ENCODE measurements at regions of chr12 and their contacts with region 1.

Region 1: DNA sequence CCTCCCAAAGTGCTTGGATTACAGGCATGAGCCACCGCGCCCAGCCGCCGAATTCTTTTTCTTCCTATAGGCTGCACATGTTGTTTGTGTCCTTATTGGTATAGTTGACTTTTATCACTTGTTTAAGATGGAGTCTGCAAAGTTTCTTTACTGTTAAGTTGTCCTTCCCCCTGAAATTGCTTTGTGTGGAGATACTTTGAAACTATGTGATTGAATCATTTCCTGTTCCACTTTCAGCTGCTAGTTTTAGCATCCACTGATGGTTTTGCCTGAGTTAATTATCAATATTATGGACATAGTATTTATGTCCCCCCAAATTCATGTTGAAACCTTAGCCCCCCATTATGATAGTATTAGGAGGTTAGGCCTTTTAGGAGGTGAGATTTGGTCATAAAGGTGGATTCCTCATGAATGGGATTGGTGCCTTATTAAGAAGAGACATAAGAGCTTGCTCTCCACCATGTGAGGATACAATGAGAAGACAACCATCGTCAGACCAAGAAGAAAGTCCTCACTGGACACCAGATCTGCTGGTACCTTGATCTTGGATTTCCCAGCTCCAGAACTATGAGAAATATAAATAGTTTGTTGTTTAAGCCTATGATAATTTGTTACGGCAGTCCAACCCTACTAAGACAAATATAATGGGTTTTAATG is 34.9 kb downstream of the PPHLN1 start:
- DNase-seq: no peak
- H3K4me3 Mint-ChIP-seq: no peak overlapping the region
- H3K27ac Mint-ChIP-seq: no peak overlapping the region
- H3K4me1 Mint-ChIP-seq: peaks cover 20% of the 10 kb centered on the region
- H3K27me3 Mint-ChIP-seq: no peaks in the 10 kb centered on the region

Region 2: DNA sequence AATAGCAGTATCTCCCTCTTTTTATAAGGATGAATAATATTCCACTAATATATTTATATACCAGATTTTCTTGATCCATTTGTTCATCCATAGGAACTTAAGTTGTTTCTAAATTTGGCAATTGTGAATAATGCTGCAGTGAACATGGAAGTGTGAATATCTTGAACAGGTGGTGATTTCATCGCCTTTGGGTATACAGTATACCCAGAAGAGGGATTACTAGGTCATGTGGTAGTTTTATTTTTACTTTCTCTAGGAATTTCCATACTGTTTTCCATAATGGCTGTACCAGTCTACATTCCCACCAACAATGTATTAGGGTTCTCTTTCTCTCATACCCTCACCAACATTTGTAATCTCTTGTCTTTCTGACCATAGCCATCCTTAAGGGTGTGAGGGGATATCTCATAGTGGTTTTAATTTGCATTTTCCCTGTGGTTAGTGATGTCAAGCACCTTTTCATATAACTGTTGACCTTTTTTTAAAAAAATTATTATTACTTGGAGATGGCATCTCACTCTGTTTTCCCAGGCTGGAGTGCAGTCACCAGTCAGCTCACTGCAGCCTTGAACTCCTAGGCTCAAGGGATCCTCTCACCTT is 14.4 kb before region 1 on chr12:
- CTCF ChIA-PET with region 1: interaction called, 13 read pairs
- POLR2A ChIA-PET with region 1: no interaction called
- DNase-seq: no peak
- H3K4me3 Mint-ChIP-seq: no peak overlapping the region
- H3K27ac Mint-ChIP-seq: no peak overlapping the region
- H3K4me1 Mint-ChIP-seq: peaks cover 5% of the 10 kb centered on the region
- H3K27me3 Mint-ChIP-seq: no peaks in the 10 kb centered on the region

Region 3: DNA sequence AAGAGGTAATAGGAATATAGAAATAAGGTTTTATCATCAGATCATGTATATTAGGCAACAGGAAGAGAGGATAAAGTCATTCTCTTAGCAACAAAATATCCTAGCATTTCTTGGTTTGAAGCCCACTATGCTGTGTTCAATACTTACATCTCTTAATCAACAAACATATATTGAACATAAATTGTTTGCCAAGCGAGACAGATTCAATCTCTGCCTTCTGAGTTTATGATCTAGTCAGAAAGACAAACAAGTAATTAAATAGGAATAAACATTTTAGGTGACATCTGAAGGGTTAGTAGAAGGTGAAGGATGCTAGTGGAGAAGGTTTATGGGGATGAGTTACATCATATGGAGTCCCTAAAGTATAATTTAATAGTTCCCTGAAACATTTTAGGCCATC is 19.9 kb after region 1 on chr12:
- CTCF ChIA-PET with region 1: no interaction called
- POLR2A ChIA-PET with region 1: no interaction called
- DNase-seq: no peak
- H3K4me3 Mint-ChIP-seq: no peak overlapping the region
- H3K27ac Mint-ChIP-seq: no peak overlapping the region
- H3K4me1 Mint-ChIP-seq: peaks cover 19% of the 10 kb centered on the region
- H3K27me3 Mint-ChIP-seq: no peaks in the 10 kb centered on the region

Region 4: GRCh38 chr12:42407306-42407705 is 46.4 kb after region 1 on chr12:
- CTCF ChIA-PET with region 1: no interaction called
- POLR2A ChIA-PET with region 1: no interaction called
- DNase-seq: no peak
- H3K4me3 Mint-ChIP-seq: no peak overlapping the region
- H3K27ac Mint-ChIP-seq: no peak overlapping the region
- H3K4me1 Mint-ChIP-seq: peaks cover 2% of the 10 kb centered on the region
- H3K27me3 Mint-ChIP-seq: no peaks in the 10 kb centered on the region

Measured in activated CD4-positive, alpha-beta T cell treated with anti-CD3 and anti-CD28 coated beads, Interleukin-2, amount 10 ng/mL, durations not matched to agents 7 days and 5 days (primary cell).